Activated CD8-positive, alpha-beta T cell treated with anti-CD3 and anti-CD28 coated beads, Interleukin-2, amount 10 ng/mL, durations not matched to agents 7 days and 5 days (primary cell): ENCODE measurements at regions of chr20 and their contacts with region 1.

Region 1: GRCh38 chr20:45823949-45824835 is 2.9 kb downstream of the TNNC2 start:
- DNase-seq: peak; percentile 63
- ATAC-seq: peak; percentile 77
- H3K4me3 Mint-ChIP-seq: peak overlapping the region; percentile 60
- H3K27ac Mint-ChIP-seq: no peak overlapping the region
- H3K4me1 Mint-ChIP-seq: peaks cover 18% of the 10 kb centered on the region
- H3K27me3 Mint-ChIP-seq: peaks cover 26% of the 10 kb centered on the region

Region 2: DNA sequence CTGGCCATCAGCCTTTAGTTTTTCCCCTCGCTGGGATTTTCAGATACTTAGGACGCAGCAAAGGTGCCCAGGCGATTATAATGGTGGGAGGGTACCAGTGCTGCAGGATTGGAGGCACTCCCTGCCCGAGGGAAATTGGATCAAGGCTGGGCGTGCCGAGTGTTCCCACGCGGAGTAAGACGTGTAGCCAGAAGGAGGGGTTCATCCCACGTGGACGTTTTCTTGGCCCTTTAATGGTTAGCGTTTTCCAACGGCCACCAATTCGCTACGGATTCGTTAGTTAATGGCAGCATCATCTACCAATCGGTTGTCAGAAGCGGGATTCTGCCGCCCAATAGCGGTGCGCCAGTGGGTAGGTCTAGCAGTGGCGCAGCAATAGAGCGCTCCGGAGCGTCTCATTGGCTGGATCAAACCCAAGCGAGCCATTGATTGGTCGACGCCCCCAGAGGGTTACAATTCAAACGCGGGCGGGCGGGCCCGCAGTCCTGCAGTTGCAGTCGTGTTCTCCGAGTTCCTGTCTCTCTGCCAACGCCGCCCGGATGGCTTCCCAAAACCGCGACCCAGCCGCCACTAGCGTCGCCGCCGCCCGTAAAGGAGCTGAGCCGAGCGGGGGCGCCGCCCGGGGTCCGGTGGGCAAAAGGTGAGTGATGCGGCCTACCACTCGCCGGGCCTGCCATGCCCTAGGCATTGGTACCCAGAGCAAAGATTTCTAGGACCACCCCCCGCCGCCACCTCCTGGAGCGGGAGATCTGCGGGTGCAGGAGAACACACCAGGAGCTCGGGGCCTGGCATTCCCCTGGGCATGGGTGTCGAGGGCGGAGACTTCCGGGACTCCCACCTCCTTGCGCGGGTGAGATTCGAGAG is 11.8 kb before region 1 on chr20 and contains the start of gene UBE2C:
- CTCF ChIA-PET with region 1: interaction called, 10 read pairs
- POLR2A ChIA-PET with region 1: interaction called, 16 read pairs
- DNase-seq: peak; percentile 98
- ATAC-seq: peak; percentile 100
- H3K4me3 Mint-ChIP-seq: peak within 1 kb of the TSS; percentile 97
- H3K27ac Mint-ChIP-seq: peak within 1 kb of the TSS; percentile 91
- H3K4me1 Mint-ChIP-seq: peaks cover 34% of the 10 kb centered on the region
- H3K27me3 Mint-ChIP-seq: no peaks in the 10 kb centered on the region
- total RNA-seq, gene UBE2C: 251 to 261 TPM